Breast epithelium (tissue), 4 donors: ENCODE measurements at regions of chr1 and their contacts with region 1.

Region 1: GRCh38 chr1:172388498-172388897 is 32.0 kb upstream of the C1orf105 start:
- DNase-seq: no peak
- H3K4me3 ChIP-seq: no peak overlapping the region
- H3K27ac ChIP-seq: no peak overlapping the region
- H3K4me1 ChIP-seq: no peaks in the 10 kb centered on the region
- H3K27me3 ChIP-seq: no peaks in the 10 kb centered on the region
- CTCF ChIP-seq: no peak
- POLR2A ChIP-seq: no peak

Region 2: GRCh38 chr1:171850651-171851350 is 537.7 kb before region 1 on chr1:
- intact Hi-C with region 1: no loop called
- DNase-seq: no peak
- H3K4me3 ChIP-seq: no peak overlapping the region
- H3K27ac ChIP-seq: no peak overlapping the region
- H3K4me1 ChIP-seq: no peaks in the 10 kb centered on the region
- H3K27me3 ChIP-seq: no peaks in the 10 kb centered on the region
- CTCF ChIP-seq: no peak
- POLR2A ChIP-seq: no peak

Region 3: DNA sequence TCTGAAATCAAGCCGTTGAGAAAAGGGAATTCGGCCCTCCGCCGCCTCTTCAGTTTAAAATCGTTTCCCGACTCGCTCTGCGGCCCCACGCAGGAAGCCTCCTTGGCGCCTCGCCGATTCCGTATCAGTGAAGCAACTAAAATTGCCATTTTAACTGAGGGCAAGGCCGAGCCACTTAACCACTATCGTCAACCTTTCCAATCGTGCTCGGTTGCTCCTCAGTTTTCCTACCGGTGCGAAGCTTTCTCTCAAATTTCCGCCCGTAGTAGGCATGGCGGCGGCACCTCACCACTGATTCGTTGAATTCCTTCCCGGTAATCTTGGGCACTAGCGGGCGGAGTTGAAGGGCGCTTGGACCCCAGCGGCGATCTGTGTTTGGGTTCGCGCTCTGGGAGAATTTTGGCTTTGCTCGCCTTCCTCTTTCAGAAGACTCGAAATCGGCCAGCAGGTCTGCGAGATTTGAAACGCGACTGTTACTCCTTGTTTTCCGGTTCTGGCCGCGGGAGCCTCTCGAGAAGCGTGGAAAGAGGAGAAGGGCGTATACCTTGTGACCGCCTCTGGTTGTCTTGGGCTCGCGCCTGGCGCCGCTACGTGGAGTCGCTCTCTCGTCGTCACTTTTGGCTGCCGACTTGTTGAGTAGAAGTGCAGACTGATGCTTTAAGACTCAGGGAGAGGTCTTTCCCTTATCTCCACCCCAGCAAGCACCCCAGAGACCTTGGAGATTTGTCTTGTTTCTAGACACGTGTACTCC is 1436.0 kb after region 1 on chr1 and contains the starts of genes CENPL and DARS2:
- intact Hi-C with region 1: loop called (anchors 5 kb)
- DNase-seq: peak; percentile 94
- H3K4me3 ChIP-seq: peak within 1 kb of the TSS; percentile 66 to 90 (median 69)
- H3K27ac ChIP-seq: peak within 1 kb of the TSS; percentile 91 to 96
- H3K4me1 ChIP-seq: no peaks in the 10 kb centered on the region
- H3K27me3 ChIP-seq: no peaks in the 10 kb centered on the region
- CTCF ChIP-seq: no peak
- POLR2A ChIP-seq: no peak
- total RNA-seq, gene CENPL: 4.5 to 6.0 (median 4.6) TPM
- total RNA-seq, gene DARS2: 9.4 to 15.8 (median 14.1) TPM